ENCODE measurements at regions of chr11 and their contacts with region 1.

Region 1: GRCh38 chr11:61747192-61747966 is 5.1 kb upstream of the MYRF start:
- DNase-seq: peak; percentile 71 to 98 (median 86)

Region 2: DNA sequence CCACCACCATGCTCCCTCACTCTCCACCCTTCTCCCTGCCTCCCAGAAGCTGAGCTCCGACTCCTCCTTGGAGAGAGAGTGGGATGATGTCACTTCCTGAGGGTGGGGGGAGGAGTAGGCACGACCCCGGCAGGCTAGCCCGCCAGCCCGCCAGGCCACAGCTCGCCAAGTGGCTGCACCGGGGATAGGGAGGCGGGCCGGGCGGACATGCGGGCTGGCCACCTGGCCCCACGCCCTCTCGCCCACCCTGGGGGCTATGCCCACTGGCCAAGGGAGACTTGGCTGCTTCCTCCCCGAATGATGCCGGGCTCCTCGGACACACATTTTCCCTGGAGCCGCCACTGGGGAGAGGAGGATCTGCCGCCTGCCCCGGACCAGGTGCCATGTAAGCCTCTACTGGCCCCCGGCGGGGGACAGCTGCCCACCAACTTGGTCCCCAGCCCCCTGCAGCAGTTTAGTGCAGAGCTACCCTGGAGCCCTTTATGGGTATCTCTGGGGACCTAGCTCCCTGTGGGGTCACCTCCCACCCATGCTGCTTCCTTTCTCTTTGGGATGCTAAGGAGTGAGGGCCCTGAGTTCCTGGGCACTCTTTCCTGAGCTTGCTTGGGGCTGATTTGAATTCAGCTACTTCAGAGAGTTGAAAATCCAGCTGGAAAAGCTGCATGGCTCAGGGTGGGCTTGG is 28.6 kb before region 1 on chr11:
- intact Hi-C with region 1: no loop called
- DNase-seq: peak in 5 of 10 donors; percentile 53 to 91 (median 58)

Region 3: GRCh38 chr11:61776551-61777075 is 29.2 kb after region 1 on chr11:
- intact Hi-C with region 1: loop called (anchors 1 kb)
- DNase-seq: peak in 7 of 10 donors; percentile 51 to 94 (median 74)

Region 4: GRCh38 chr11:61787928-61788491 is 40.6 kb after region 1 on chr11:
- intact Hi-C with region 1: loop called (anchors 2 kb)
- DNase-seq: peak in 6 of 10 donors; percentile 55 to 93 (median 57)